T-cell (primary cell): ENCODE measurements at regions of chr4 and their contacts with region 1.

Region 1: DNA sequence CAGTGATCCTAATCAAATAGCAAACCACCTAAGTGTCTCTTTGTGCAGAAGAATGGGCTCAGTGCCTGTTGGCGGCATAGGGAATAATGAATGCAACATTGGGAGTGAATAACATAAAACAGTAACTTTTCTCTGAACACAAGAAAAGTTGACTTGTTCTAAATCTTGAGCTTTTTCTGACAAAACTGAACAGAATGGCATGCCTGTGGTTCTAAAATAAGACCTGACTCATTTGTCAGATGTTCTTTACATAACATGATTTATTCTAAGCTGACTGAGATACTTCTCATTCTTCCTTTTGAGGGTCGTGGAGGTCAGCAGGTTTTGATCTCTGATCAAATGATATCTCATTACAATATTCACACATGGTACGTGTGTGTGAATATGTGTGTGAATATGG is 165.4 kb upstream of the WDR1 start:
- DNase-seq: no peak
- ATAC-seq: no peak
- H3K4me3 ChIP-seq: no peak overlapping the region
- H3K4me3 Mint-ChIP-seq: no peak overlapping the region
- H3K27ac ChIP-seq: no peak overlapping the region
- H3K27ac Mint-ChIP-seq: no peak overlapping the region
- H3K4me1 ChIP-seq: no peaks in the 10 kb centered on the region
- H3K4me1 Mint-ChIP-seq: no peaks in the 10 kb centered on the region
- H3K27me3 ChIP-seq: peaks cover 0 to 3% of the 10 kb centered on the region in 2 experiments
- H3K27me3 Mint-ChIP-seq: peaks cover 2 to 5% of the 10 kb centered on the region in 2 donors

Region 2: GRCh38 chr4:10253755-10254154 is 28.2 kb before region 1 on chr4:
- CTCF ChIA-PET with region 1: no interaction called
- POLR2A ChIA-PET with region 1: no interaction called
- DNase-seq: no peak
- ATAC-seq: no peak
- H3K4me3 ChIP-seq: no peak overlapping the region
- H3K4me3 Mint-ChIP-seq: no peak overlapping the region
- H3K27ac ChIP-seq: no peak overlapping the region
- H3K27ac Mint-ChIP-seq: no peak overlapping the region
- H3K4me1 ChIP-seq: no peaks in the 10 kb centered on the region
- H3K4me1 Mint-ChIP-seq: no peaks in the 10 kb centered on the region
- H3K27me3 ChIP-seq: peaks cover 0 to 5% of the 10 kb centered on the region in 2 experiments
- H3K27me3 Mint-ChIP-seq: peaks cover 4 to 9% of the 10 kb centered on the region in 2 donors

Region 3: DNA sequence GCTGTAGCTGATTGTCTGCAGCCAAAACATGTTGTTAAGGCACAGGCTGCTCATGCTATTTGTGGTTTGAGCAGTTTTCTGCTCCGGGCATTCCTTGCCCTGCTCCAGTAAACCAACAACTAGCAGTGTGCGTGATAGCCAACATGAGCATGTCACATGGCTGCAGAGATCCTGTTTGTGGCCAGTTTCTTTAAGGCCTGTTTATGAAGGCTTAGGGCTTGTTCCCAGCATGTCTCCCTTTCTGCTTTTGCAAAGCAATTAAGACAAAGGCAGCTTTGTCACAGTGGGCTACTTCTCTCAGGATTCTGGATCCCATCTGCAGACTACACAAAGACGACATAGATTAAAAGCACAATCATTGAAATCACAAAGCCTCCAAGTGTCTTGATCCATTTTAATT is 14.7 kb after region 1 on chr4:
- CTCF ChIA-PET with region 1: no interaction called
- POLR2A ChIA-PET with region 1: no interaction called
- DNase-seq: no peak
- ATAC-seq: no peak
- H3K4me3 ChIP-seq: no peak overlapping the region
- H3K4me3 Mint-ChIP-seq: no peak overlapping the region
- H3K27ac ChIP-seq: no peak overlapping the region
- H3K27ac Mint-ChIP-seq: no peak overlapping the region
- H3K4me1 ChIP-seq: no peaks in the 10 kb centered on the region
- H3K4me1 Mint-ChIP-seq: no peaks in the 10 kb centered on the region
- H3K27me3 ChIP-seq: no peaks in the 10 kb centered on the region
- H3K27me3 Mint-ChIP-seq: peaks cover 6 to 21% of the 10 kb centered on the region in 2 donors

Region 4: DNA sequence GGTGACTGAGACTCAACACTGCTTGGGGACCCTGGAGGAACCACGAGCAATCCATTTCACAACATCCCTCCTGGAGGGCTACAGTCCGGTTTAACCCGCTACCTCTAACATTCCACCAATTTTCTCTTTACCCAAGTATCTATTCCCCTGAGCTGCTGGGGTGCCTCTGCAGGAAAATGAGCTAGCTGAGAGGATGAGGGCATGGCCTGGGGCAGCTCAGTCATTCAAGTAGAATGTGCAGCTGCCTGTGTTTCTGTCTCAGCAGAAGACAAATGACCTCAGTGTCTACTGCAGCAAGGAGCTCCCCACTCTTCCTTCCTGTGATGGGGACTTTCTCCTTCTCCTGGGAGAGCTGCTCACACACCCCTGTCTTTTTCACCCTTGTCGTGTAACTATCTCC is 54.5 kb after region 1 on chr4:
- CTCF ChIA-PET with region 1: no interaction called
- POLR2A ChIA-PET with region 1: no interaction called
- DNase-seq: no peak
- ATAC-seq: no peak
- H3K4me3 ChIP-seq: no peak overlapping the region
- H3K4me3 Mint-ChIP-seq: no peak overlapping the region
- H3K27ac ChIP-seq: no peak overlapping the region
- H3K27ac Mint-ChIP-seq: no peak overlapping the region
- H3K4me1 ChIP-seq: no peaks in the 10 kb centered on the region
- H3K4me1 Mint-ChIP-seq: no peaks in the 10 kb centered on the region
- H3K27me3 ChIP-seq: peaks cover 5 to 6% of the 10 kb centered on the region in 2 experiments
- H3K27me3 Mint-ChIP-seq: peaks cover 32 to 35% of the 10 kb centered on the region in 2 donors

Region 5: GRCh38 chr4:10364194-10364593 is 82.2 kb after region 1 on chr4:
- CTCF ChIA-PET with region 1: no interaction called
- POLR2A ChIA-PET with region 1: interaction called in 1 of 2 experiments, 16 read pairs
- DNase-seq: no peak
- ATAC-seq: no peak
- H3K4me3 ChIP-seq: no peak overlapping the region
- H3K4me3 Mint-ChIP-seq: no peak overlapping the region
- H3K27ac ChIP-seq: no peak overlapping the region
- H3K27ac Mint-ChIP-seq: no peak overlapping the region
- H3K4me1 ChIP-seq: no peaks in the 10 kb centered on the region
- H3K4me1 Mint-ChIP-seq: no peaks in the 10 kb centered on the region
- H3K27me3 ChIP-seq: no peaks in the 10 kb centered on the region
- H3K27me3 Mint-ChIP-seq: peaks cover 12 to 18% of the 10 kb centered on the region in 2 donors

Region 6: DNA sequence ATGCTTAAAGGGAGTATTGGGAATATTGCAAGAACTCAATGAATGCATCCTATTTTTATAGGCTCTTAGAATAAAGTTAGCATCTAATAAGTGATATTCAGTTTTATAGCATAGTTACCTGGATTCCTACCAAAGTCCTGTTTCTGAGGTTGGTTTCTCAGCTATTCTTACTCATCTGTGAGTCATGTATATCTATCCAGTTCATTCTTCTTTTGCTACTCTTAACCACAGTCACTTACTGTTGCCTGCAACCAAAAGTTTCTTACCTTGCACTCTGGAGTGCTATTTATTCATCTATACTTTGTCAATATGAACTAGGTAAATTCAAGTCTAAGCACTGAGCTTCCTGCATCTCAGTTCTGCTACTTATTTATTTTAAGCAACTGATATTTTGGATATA is 824.2 kb after region 1 on chr4:
- CTCF ChIA-PET with region 1: no interaction called
- POLR2A ChIA-PET with region 1: no interaction called
- DNase-seq: no peak
- ATAC-seq: no peak
- H3K4me3 ChIP-seq: no peak overlapping the region
- H3K4me3 Mint-ChIP-seq: no peak overlapping the region
- H3K27ac ChIP-seq: no peak overlapping the region
- H3K27ac Mint-ChIP-seq: no peak overlapping the region
- H3K4me1 ChIP-seq: no peaks in the 10 kb centered on the region
- H3K4me1 Mint-ChIP-seq: no peaks in the 10 kb centered on the region
- H3K27me3 ChIP-seq: no peaks in the 10 kb centered on the region
- H3K27me3 Mint-ChIP-seq: no peaks in the 10 kb centered on the region